SK-N-SH (cell line): ENCODE measurements at regions of chr20 and their contacts with region 1.

Region 1: DNA sequence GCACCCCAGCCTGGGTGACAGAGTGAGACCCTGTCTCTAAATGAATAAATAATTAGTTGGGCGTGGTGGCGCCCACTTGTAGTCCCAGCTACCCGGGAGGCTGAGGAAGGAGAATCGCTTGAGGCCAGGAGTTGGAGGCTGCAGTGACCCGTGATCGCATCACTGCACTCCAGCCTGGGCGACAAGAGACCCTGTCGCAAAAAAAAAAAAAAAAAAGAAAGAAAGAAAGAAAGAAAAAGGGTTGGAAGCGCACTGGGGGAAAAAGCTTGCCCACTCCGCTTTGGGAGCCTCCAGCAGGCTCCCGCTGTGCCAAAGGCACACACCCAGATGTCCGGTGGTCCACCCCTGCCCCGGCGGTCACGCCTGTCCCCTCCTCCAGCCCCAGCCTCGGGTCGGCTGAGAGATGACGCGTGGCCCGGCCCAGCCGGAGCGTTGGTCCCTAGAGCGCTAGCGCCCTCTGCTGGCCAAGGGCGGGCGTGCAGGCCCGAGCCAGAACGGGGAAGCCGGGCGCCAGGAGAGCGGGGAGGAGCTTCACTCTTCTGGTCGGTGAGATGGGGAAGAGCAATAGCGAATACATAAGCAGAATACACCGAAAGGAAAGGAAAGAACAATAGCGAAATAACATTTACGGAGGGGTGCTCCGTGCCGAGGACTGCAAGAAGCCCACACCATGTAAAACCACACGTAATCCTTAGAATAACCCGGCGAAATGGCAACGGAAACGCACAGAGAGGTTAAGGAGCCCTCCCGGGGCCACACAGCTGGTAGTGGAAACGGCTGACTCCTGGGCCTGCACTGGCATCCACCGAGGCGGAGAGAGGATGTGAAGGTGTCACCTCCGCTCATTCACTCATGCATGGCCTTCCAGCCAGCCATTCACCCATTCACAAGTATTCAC is 41.7 kb downstream of the UBE2V1 start:
- DNase-seq: peak; percentile 96
- H3K4me3 ChIP-seq: peak overlapping the region; percentile 37 to 70
- H3K27ac ChIP-seq: 0 out of 4 replicates have a peak overlapping the region, but pooled peaks of 1 of the 2 experiments have one; percentile 3
- H3K4me1 ChIP-seq: peaks cover 0 to 5% of the 10 kb centered on the region in 2 experiments; a peak in 1 of 4 replicates
- H3K27me3 ChIP-seq: no peaks in the 10 kb centered on the region
- CTCF ChIP-seq: peak; percentile 99
- EP300 ChIP-seq: no peak
- RAD21 ChIP-seq: peak; percentile 99

Region 2: DNA sequence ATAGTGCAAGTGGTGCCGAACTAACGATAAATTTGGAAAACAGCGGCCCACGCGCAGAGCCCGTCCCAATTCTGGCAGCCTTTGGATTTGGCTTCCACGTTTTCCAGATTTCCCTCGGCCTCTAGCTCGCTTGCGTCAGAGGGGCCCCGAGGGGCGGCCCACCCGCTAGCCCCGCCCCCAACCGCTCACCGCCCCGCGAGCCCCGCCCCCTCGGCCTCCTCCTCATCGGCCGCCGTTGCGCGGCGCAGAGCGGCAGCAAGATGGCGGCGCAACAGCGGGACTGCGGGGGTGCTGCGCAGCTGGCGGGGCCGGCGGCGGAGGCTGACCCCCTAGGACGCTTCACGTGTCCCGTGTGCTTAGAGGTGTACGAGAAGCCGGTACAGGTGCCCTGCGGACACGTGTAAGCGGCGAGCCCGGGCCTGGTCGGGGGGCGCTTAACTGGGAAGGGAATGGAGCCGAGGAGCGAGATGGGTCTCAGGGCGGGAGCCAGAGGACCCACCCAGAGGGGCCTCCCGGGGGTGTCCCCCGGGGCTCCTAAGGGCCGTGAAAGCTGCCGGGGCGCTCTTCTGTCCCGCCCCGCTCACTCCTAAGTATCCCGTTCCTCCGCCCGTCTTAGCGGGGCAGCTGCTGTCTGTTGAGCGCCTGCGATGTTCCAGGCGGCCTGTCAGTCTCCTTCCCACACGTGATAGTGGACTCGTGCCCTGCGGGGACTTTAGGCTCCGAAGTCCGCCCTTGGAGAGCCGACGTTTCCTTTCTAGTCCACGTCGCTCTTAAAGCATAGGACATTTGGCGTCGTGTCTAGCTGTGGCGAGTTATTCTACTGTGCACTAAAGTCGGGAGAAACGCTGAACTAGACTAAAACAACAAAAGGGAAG is 134.8 kb before region 1 on chr20 and contains the start of gene RNF114:
- CTCF ChIA-PET with region 1: interaction called, 16 read pairs
- POLR2A ChIA-PET with region 1: interaction called, 5 read pairs
- DNase-seq: peak; percentile 100
- H3K4me3 ChIP-seq: peak within 1 kb of the TSS; percentile 74 to 90
- H3K27ac ChIP-seq: peak within 1 kb of the TSS; percentile 59 to 66; a peak in 3 of 4 replicates
- H3K4me1 ChIP-seq: peaks cover 18 to 21% of the 10 kb centered on the region in 2 experiments; a peak in 3 of 4 replicates
- H3K27me3 ChIP-seq: no peaks in the 10 kb centered on the region
- CTCF ChIP-seq: no peak
- EP300 ChIP-seq: 0 out of 4 replicates have a peak, but pooled peaks of 1 of the 2 experiments have one; percentile 18
- RAD21 ChIP-seq: no peak
- polyA plus RNA-seq, gene RNF114: 30.2 and 55.0 TPM in 2 replicates

Region 3: GRCh38 chr20:50005471-50005981 is 65.7 kb before region 1 on chr20:
- CTCF ChIA-PET with region 1: interaction called, 13 read pairs
- POLR2A ChIA-PET with region 1: no interaction called
- DNase-seq: no peak
- H3K4me3 ChIP-seq: no peak overlapping the region
- H3K27ac ChIP-seq: no peak overlapping the region
- H3K4me1 ChIP-seq: no peaks in the 10 kb centered on the region
- H3K27me3 ChIP-seq: no peaks in the 10 kb centered on the region
- CTCF ChIP-seq: no peak
- EP300 ChIP-seq: no peak
- RAD21 ChIP-seq: no peak

Region 4: DNA sequence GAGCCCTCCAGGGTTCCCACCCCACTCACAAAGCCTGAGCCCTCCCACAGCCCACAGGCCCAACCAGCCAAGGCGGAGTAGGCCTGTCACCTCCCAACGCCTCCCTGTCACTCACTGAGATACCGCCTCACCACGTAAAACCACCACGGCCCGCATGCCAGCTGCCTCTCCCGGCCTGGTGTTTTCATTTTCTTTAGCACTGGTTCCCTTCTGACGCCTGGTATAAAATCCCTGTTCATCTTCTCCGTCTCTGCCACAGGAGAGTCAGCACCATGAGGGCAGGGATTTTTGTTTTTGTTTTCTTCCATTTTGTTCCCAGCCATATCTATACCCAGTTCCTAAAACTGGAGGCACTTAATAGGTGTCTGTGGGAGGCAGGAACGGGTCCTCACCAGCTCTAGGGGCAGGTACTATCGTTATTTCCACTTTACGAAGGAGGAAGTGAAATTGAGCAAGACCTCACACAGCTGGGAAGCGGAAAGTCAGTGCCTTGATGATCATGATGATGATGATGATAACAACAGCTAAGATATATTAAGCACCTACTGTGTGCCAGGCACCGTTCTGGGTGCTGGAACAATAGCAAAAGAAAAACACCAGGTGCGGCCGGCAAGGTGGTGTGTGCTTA is 29.9 kb before region 1 on chr20:
- CTCF ChIA-PET with region 1: interaction called, 26 read pairs
- POLR2A ChIA-PET with region 1: no interaction called
- DNase-seq: no peak
- H3K4me3 ChIP-seq: no peak overlapping the region
- H3K27ac ChIP-seq: peak overlapping the region in 1 of 2 experiments; percentile 16; a peak in 1 of 4 replicates
- H3K4me1 ChIP-seq: peaks cover 0 to 21% of the 10 kb centered on the region in 2 experiments; a peak in 1 of 4 replicates
- H3K27me3 ChIP-seq: no peaks in the 10 kb centered on the region
- CTCF ChIP-seq: no peak
- EP300 ChIP-seq: no peak
- RAD21 ChIP-seq: no peak

Region 5: DNA sequence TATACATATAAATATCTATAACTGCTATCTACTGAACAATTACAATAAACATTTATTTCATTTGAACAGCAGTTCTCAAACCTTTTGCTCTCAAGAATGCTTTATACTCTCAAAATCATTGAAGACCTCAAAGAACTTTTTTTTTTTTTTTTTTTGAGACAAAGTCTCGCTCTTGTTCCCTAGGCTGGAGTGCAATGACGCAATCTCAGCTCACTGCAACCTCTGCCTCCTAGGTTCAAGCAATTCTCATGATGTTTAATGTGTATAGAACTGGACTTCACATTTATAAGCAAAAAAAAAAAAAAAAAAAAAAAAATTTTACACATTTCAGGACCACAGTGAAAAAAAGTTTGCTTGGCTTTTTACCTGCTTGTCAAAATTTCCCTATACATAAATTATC is 30.0 kb after region 1 on chr20:
- CTCF ChIA-PET with region 1: interaction called, 19 read pairs
- POLR2A ChIA-PET with region 1: no interaction called
- DNase-seq: no peak
- H3K4me3 ChIP-seq: no peak overlapping the region
- H3K27ac ChIP-seq: no peak overlapping the region
- H3K4me1 ChIP-seq: peaks cover 4 to 33% of the 10 kb centered on the region in 2 experiments; a peak in 3 of 4 replicates
- H3K27me3 ChIP-seq: no peaks in the 10 kb centered on the region
- CTCF ChIP-seq: no peak
- EP300 ChIP-seq: no peak
- RAD21 ChIP-seq: no peak

Region 6: DNA sequence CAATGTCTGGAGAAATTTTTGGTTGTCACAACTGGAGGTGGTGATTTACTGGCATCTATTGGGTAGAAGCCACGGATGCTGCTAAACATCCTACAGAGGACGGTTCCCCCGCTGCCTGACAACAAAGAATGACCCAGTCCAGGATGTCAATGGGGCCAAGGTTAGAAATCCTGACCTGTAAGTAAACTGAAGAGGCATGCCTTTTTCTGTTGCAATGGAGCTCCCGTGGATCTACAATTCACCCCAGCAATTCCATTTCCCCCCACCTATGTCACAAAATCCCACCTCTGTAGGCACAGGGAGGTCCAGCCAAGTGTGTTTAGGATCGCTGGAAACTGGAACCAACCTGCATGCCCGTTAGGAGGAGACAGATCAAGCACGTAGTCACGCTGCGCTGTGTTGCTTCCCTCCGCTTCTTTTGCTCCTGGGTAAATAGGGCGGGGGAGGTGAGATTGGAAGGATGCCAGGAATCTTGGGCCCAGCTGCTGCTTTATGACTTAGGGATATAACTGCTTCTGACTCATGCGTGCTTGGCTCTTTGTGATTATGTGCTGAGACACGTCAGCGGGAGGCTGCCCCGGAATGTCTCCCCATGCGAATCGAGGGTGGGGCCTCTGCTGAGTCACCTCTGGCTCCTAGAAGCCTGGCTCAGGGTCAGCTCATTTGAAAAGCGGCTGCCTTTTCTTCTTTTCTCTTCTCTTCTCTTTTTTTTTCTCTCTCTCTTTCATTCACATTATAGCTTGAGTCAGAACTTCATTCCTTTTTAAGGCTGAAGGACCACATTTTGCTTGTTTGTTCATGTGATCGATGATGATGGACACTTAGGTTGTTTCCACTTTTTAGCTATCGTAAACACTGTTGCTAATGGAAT is 94.7 kb after region 1 on chr20:
- CTCF ChIA-PET with region 1: interaction called, 23 read pairs
- POLR2A ChIA-PET with region 1: no interaction called
- DNase-seq: peak; percentile 88
- H3K4me3 ChIP-seq: peak overlapping the region; percentile 36 to 62
- H3K27ac ChIP-seq: peak overlapping the region; percentile 87 to 93
- H3K4me1 ChIP-seq: peaks cover 12 to 14% of the 10 kb centered on the region in 2 experiments; a peak in 3 of 4 replicates
- H3K27me3 ChIP-seq: no peaks in the 10 kb centered on the region
- CTCF ChIP-seq: no peak
- EP300 ChIP-seq: peak; percentile 75 to 83; a peak in 3 of 4 replicates
- RAD21 ChIP-seq: no peak